Dendritic cell treated with granulocyte-macrophage colony-stimulating factor and Interleukin-4, amounts not matched to agents 40 ng/mL and 50 ng/mL, for 4 days (primary cell): ENCODE measurements at regions of chr16 and their contacts with region 1.

Region 1: GRCh38 chr16:57720142-57720575 is 15.4 kb upstream of the KATNB1 start:
- H3K4me3 Mint-ChIP-seq: no peak overlapping the region
- H3K27ac Mint-ChIP-seq: no peak overlapping the region
- H3K4me1 Mint-ChIP-seq: no peaks in the 10 kb centered on the region
- H3K27me3 Mint-ChIP-seq: no peaks in the 10 kb centered on the region

Region 2: DNA sequence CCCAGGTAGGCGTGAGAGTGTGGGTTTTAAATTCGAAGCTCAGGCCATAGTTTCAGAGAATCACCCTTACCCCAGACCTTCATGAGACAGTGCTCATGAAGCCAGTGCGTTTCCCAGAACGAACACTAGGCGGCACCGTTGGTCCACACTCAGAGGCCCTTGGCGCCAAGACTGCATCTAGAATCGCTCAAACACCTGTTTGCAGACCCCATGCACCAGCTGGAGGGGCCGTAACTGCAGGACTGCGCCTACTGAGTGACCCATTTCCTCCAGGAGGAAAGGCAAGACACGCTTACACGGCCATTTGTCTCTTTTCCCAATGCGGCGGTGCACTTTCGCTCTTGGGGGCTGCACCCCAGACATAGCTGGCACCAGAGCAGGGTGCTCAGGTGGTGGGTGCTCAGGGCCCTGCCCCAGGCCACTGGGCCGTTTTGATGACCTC is 143.7 kb before region 1 on chr16:
- intact Hi-C with region 1: loop called (anchors 2 kb)
- H3K4me3 Mint-ChIP-seq: no peak overlapping the region
- H3K27ac Mint-ChIP-seq: no peak overlapping the region
- H3K4me1 Mint-ChIP-seq: peaks cover 16% of the 10 kb centered on the region
- H3K27me3 Mint-ChIP-seq: peaks cover 89% of the 10 kb centered on the region

Region 3: GRCh38 chr16:57591086-57591869 is 128.9 kb before region 1 on chr16:
- intact Hi-C with region 1: loop called (anchors 5 kb)
- H3K4me3 Mint-ChIP-seq: no peak overlapping the region
- H3K27ac Mint-ChIP-seq: no peak overlapping the region
- H3K4me1 Mint-ChIP-seq: peaks cover 30% of the 10 kb centered on the region
- H3K27me3 Mint-ChIP-seq: peaks cover 39% of the 10 kb centered on the region

Region 4: DNA sequence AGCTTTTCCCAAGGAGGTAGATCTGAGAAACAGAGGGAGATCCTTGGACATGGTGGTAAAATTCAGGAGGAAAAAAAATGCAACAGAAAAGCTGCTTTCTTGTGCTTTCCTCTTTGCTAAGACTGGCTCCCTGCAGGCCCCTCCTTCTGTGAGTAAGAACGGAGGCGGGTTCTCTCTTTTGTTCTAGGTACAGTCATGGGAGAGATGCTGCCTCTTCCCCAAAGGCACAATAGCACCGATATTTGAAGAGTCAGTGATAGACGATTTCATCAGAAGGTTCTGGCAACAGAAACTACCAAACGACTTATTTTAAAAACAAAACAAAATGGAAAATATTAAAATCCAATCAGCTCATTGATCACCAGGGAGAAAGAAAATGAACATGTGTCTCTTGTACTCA is 114.8 kb after region 1 on chr16:
- intact Hi-C with region 1: no loop called
- H3K4me3 Mint-ChIP-seq: no peak overlapping the region
- H3K27ac Mint-ChIP-seq: no peak overlapping the region
- H3K4me1 Mint-ChIP-seq: no peaks in the 10 kb centered on the region
- H3K27me3 Mint-ChIP-seq: peaks cover 13% of the 10 kb centered on the region